ENCODE measurements at regions of chr1 and their contacts with region 1.

Region 1: GRCh38 chr1:198771563-198772153 is 132.8 kb downstream of the PTPRC start:
- DNase-seq: no peak

Region 2: GRCh38 chr1:199113265-199113869 is 341.7 kb after region 1 on chr1:
- intact Hi-C with region 1: loop called (anchors 10 kb)
- DNase-seq: peak; percentile 23 to 95 (median 66)

Region 3: DNA sequence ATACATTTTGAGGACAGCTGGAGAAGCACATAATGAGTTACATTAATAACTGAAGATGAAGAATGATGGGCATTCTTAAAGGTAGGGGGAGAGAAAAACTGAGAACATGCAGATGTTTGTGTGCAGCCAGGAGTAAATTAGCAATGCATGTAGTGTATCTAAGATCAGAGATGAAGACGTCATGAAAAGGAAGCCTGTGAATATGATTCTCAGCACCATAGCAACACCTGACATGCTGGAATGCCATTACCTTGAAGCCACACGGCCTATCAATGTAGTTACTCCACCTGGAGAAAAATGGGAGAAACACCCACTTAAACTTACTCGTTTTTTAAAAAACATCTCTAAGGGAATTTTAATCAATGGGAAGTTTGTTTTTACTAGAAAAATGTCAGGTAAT is 474.3 kb after region 1 on chr1:
- intact Hi-C with region 1: loop called (anchors 5 kb)
- DNase-seq: no peak

Measured in posterior cingulate gyrus (tissue), 11 donors.